Mammary epithelial cell (primary cell): ENCODE measurements at regions of chr15 and their contacts with region 1.

Region 1: DNA sequence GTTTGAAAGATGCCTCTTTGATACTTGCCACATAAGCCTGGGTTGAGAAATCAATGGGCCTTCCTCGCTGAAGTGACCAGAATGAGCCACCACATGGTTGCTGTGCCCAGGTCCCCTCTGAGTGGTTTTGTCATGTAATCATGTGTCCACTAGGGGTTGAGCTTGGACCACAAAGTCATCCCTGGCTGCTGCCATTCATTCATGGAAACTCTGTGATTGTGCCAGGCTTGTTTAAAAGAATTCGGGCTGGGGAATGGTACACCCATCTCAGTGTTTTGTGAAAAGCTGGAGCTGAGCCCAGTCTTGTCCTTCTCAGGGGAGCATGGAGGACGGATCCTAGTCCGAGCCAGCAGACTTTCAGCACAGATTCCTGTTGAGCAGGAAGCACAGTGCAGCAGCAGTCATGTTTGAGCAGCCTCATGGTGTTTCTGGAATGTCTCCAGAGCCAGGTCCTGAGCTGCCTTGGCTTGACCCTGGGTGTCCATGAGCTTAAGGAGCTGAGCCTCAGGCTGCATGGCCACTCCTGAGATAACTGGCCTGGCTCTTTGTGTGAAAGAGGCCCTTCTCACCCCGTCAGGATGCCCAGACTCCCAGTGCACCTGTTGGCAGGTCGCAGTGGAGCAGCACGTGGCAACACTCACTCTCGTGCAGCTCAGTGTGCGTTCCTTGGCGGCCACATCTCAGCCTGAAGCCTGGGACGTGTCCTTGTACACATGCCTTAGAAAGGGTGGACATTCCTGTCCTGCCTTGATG is 260.3 kb upstream of the TPM1 start:
- DNase-seq: peak; percentile 64
- H3K4me3 ChIP-seq: no peak overlapping the region
- H3K27ac ChIP-seq: no peak overlapping the region
- H3K4me1 ChIP-seq: peaks cover 10% of the 10 kb centered on the region
- H3K27me3 ChIP-seq: no peaks in the 10 kb centered on the region
- CTCF ChIP-seq: peak; percentile 79 to 81

Region 2: DNA sequence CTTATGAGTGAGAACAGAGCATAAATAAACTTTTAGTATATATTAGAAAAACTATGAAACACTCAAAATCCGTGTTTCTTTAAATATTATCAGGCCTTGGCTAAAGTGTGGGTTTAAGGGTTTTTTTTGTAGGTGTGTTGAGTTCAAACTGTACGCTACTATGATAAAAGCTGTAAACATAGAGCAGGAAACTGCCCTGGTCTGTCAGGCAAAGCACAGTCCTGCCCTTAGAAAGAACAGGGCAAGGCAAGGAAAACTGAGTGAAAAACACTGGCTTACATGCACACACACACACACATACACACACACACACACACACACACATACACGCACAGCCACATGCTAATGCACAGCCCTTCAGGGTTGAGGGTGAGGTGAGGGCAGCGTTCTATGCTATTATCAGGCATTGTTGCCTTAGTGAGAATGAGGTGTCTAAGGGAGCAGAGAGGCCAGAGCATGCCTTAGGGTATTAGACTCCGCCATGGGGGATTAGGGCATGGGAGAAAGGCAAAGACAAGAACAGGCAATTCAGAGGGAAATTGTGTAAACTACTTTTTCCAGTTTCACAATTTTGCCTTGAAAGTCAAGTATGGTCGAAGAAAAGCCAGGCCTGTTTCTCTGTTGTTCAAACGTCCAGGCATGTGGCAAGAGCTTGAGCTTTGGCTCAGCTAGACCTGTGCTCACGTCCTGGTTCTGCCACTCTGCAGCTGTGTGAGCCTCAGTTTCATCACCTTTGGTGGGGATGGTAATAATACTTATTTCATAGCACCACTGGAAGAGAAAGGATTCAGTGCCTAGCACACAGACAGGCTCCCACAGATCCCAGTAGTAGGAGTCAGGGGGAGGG is 224.0 kb after region 1 on chr15:
- CTCF ChIA-PET with region 1: no interaction called
- dilution Hi-C with region 1: no loop called
- in situ Hi-C with region 1: no loop called
- intact Hi-C with region 1: loop called (anchors 1 kb)
- DNase-seq: peak; percentile 31
- H3K4me3 ChIP-seq: no peak overlapping the region
- H3K27ac ChIP-seq: no peak overlapping the region
- H3K4me1 ChIP-seq: peaks cover 14% of the 10 kb centered on the region
- H3K27me3 ChIP-seq: no peaks in the 10 kb centered on the region
- CTCF ChIP-seq: no peak